ENCODE measurements at regions of chr3 and their contacts with region 1.

Region 1: GRCh38 chr3:128584412-128585020 is 66.1 kb downstream of the RPN1 start:
- DNase-seq: peak; percentile 24
- H3K4me3 ChIP-seq: no peak overlapping the region
- H3K27ac ChIP-seq: no peak overlapping the region
- H3K27me3 ChIP-seq: peaks cover 2% of the 10 kb centered on the region
- CTCF ChIP-seq: peak; percentile 80

Region 2: DNA sequence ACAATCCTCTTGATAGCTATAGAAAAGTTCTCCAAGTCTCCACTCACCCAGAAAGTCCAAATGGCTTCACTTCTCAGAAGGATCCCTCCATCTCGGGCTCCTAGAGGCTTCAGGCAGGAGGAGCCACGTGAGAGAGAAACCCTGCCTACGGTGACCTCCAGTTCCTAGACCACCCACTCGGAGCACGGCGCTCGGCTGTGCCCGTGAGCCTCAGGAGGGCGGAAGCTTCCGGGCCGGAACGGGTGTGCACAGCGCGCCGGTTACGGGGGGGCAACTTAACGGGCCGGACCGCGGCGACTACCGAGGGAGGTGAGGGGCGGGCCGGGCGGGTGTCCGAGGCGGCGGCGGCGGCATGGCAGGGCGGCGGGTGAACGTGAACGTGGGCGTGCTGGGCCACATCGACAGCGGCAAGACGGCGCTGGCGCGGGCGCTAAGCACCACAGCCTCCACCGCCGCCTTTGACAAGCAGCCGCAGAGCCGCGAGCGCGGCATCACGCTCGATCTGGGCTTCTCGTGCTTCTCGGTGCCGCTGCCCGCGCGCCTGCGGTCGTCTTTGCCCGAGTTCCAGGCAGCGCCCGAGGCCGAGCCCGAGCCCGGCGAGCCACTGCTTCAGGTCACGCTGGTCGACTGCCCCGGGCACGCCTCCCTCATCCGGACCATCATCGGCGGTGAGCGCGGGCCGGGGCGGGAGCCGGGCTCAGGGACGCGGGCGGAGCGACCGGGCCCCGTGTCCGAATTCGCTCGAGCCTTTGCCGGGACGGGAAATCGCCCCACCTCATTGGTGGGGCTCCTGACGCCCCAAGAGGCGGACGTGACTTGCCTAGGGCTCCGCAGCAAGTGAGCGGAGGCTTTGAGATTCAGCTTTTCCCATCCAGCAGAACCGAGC is 431.1 kb before region 1 on chr3 and contains the start of gene EEFSEC:
- in situ Hi-C with region 1: loop called (anchors 25 kb)
- DNase-seq: peak; percentile 54
- H3K4me3 ChIP-seq: peak within 1 kb of the TSS; percentile 75
- H3K27ac ChIP-seq: peak within 1 kb of the TSS; percentile 36
- H3K27me3 ChIP-seq: no peaks in the 10 kb centered on the region
- CTCF ChIP-seq: no peak

Region 3: DNA sequence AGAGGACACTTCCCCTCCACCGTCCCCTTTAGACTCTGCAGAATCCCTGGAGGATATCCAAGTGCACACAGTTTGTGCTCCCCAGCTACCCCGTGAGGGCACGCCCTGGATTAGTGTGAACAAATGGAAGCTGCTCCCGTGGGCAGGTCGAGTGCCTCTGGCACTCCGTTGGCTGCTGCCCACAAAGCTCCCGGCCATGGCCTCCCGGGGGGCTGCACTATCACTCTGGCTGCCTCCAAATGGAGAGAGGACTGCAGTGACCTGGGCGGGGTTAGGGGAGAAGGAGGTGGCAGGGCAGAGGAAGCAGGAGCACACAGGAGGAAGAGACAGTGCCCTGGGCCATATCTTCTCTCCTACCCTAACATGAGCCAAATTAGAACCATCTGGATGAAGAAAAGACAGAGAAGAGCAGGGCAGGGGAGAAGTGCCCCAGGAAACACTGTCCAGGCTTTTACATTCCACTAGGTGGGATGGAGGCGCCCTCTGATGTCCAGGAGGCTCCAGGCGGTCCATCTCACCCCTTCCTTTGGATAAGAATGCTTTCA is 265.5 kb after region 1 on chr3:
- in situ Hi-C with region 1: no loop called
- DNase-seq: no peak
- H3K4me3 ChIP-seq: no peak overlapping the region
- H3K27ac ChIP-seq: no peak overlapping the region
- H3K27me3 ChIP-seq: no peaks in the 10 kb centered on the region
- CTCF ChIP-seq: peak; percentile 49

Measured in brain microvascular endothelial cell (primary cell).